ENCODE measurements at regions of chr1 and their contacts with region 1.

Region 1: GRCh38 chr1:15788624-15789301 is 18.7 kb downstream of the UQCRHL start:
- DNase-seq: no peak
- H3K4me3 ChIP-seq: no peak overlapping the region
- H3K27ac ChIP-seq: no peak overlapping the region
- H3K4me1 ChIP-seq: no peaks in the 10 kb centered on the region
- H3K27me3 ChIP-seq: no peaks in the 10 kb centered on the region; a peak in 1 of 7 replicates
- CTCF ChIP-seq: no peak
- EP300 ChIP-seq: no peak
- POLR2A ChIP-seq: no peak
- RAD21 ChIP-seq: no peak

Region 2: GRCh38 chr1:15771836-15772515 is 16.8 kb before region 1 on chr1:
- CTCF ChIA-PET with region 1: interaction called, 10 read pairs
- POLR2A ChIA-PET with region 1: interaction called, 37 read pairs
- DNase-seq: no peak
- H3K4me3 ChIP-seq: no peak overlapping the region
- H3K27ac ChIP-seq: no peak overlapping the region
- H3K4me1 ChIP-seq: no peaks in the 10 kb centered on the region
- H3K27me3 ChIP-seq: no peaks in the 10 kb centered on the region
- CTCF ChIP-seq: no peak
- EP300 ChIP-seq: no peak
- POLR2A ChIP-seq: no peak
- RAD21 ChIP-seq: no peak

Region 3: GRCh38 chr1:15810073-15810472 is 21.3 kb after region 1 on chr1:
- CTCF ChIA-PET with region 1: interaction called, 13 read pairs
- POLR2A ChIA-PET with region 1: interaction called, 3 read pairs
- DNase-seq: no peak
- H3K4me3 ChIP-seq: no peak overlapping the region
- H3K27ac ChIP-seq: no peak overlapping the region
- H3K4me1 ChIP-seq: peaks cover 0 to 4% (median 2%) of the 10 kb centered on the region in 4 experiments; a peak in 2 of 7 replicates
- H3K27me3 ChIP-seq: no peaks in the 10 kb centered on the region
- CTCF ChIP-seq: no peak
- EP300 ChIP-seq: no peak
- POLR2A ChIP-seq: no peak
- RAD21 ChIP-seq: no peak

Region 4: GRCh38 chr1:15937706-15938168 is 149.0 kb after region 1 on chr1:
- CTCF ChIA-PET with region 1: interaction called, 30 read pairs
- POLR2A ChIA-PET with region 1: no interaction called
- DNase-seq: peak in 1 of 2 experiments; percentile 57
- H3K4me3 ChIP-seq: no peak overlapping the region
- H3K27ac ChIP-seq: peak overlapping the region; percentile 22; the same call in 1 of the 2 replicates
- H3K4me1 ChIP-seq: no peaks in the 10 kb centered on the region
- H3K27me3 ChIP-seq: no peaks in the 10 kb centered on the region; a peak in 1 of 7 replicates
- CTCF ChIP-seq: peak in 2 of 3 experiments; percentile 40 to 53; a peak in 3 of 4 replicates
- EP300 ChIP-seq: no peak
- POLR2A ChIP-seq: no peak
- RAD21 ChIP-seq: peak; percentile 45 to 59

Region 5: GRCh38 chr1:15994590-15995351 is 206.0 kb after region 1 on chr1:
- CTCF ChIA-PET with region 1: interaction called, 15 read pairs
- POLR2A ChIA-PET with region 1: no interaction called
- DNase-seq: no peak
- H3K4me3 ChIP-seq: no peak overlapping the region
- H3K27ac ChIP-seq: no peak overlapping the region
- H3K4me1 ChIP-seq: no peaks in the 10 kb centered on the region
- H3K27me3 ChIP-seq: peaks cover 0 to 3% (median 0%) of the 10 kb centered on the region in 4 experiments; a peak in 1 of 7 replicates
- CTCF ChIP-seq: peak; percentile 64 to 71 (median 67)
- EP300 ChIP-seq: no peak
- POLR2A ChIP-seq: no peak
- RAD21 ChIP-seq: peak; percentile 53 to 68